Natural killer cell (primary cell): ENCODE measurements at regions of chr2 and their contacts with region 1.

Region 1: GRCh38 chr2:178522950-178523595 is 42.8 kb downstream of the PLEKHA3 start:
- DNase-seq: peak; percentile 72 to 93
- ATAC-seq: peak; percentile 99 to 100 (median 100)
- H3K4me3 ChIP-seq: peak overlapping the region; percentile 54
- H3K4me3 Mint-ChIP-seq: peak overlapping the region; percentile 92
- H3K27ac ChIP-seq: peak overlapping the region; percentile 28
- H3K27ac Mint-ChIP-seq: peak overlapping the region; percentile 84 to 89
- H3K4me1 ChIP-seq: peaks cover 12% of the 10 kb centered on the region
- H3K4me1 Mint-ChIP-seq: peaks cover 29 to 30% of the 10 kb centered on the region in 2 donors
- H3K27me3 ChIP-seq: no peaks in the 10 kb centered on the region
- H3K27me3 Mint-ChIP-seq: no peaks in the 10 kb centered on the region
- CTCF ChIP-seq: peak; percentile 71

Region 2: GRCh38 chr2:178450774-178451525 is 72.1 kb before region 1 on chr2 and contains the starts of genes PJVK and PRKRA:
- intact Hi-C with region 1: loop called (anchors 1 kb)
- DNase-seq: peak; percentile 94 to 98
- ATAC-seq: peak; percentile 94 to 99 (median 95)
- H3K4me3 ChIP-seq: peak within 1 kb of the TSS; percentile 94
- H3K4me3 Mint-ChIP-seq: peak within 1 kb of the TSS; percentile 88
- H3K27ac ChIP-seq: peak within 1 kb of the TSS; percentile 83
- H3K27ac Mint-ChIP-seq: peak within 1 kb of the TSS; percentile 17 to 92
- H3K4me1 ChIP-seq: peaks cover 13% of the 10 kb centered on the region
- H3K4me1 Mint-ChIP-seq: peaks cover 34 to 37% of the 10 kb centered on the region in 2 donors
- H3K27me3 ChIP-seq: no peaks in the 10 kb centered on the region
- H3K27me3 Mint-ChIP-seq: peaks cover 5 to 13% of the 10 kb centered on the region in 2 donors
- CTCF ChIP-seq: no peak
- total RNA-seq, gene PJVK: 1.3 to 2.7 (median 2.5) TPM
- total RNA-seq, gene PRKRA: 42.1 to 48.3 (median 44.0) TPM